HEK293 (cell line): ENCODE measurements at regions of chr10 and their contacts with region 1.

Region 1: DNA sequence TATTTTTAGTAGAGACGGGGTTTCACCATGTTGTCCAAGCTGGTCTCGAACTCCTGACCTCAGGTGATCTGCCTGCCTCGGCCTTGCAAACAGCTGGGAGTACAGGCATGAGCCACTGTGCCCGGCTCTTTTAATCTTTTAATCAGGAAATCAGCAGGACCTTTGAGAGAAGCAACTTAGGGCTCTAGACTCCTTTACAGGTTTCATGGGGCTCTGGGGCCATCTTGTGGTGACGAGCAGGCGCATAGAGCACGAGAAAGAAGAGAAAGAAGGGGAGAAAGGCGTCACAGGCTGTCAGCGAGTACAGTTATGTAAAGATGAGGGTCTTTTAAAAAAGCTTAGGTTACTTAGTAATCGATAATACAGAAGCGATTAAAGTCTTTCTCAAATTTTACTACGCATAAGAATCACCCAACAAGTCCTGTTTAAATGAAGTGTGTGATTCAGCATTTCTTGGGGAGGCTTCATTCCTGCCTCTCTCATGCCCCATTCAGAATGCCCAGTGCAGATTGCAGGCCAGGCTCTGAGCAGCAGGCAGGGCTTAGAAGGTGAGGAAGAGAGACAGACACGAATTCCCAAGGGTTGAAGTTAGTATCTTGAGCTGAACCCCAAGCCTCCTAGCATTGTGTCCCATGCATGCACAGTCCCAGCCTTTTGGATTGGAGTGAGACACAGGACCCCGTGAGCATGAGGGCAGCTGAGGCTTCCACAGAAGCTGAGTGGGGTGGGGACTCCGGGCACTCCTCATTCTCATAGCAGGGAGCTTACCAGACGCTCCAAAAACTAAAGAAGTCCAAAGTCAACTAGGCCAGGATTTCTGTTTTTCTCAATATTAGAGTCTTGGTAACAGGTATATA is 23.6 kb upstream of the PFKP start:
- H3K4me3 ChIP-seq: no peak overlapping the region
- H3K27ac ChIP-seq: no peak overlapping the region
- H3K4me1 ChIP-seq: no peaks in the 10 kb centered on the region
- CTCF ChIP-seq: peak; percentile 55; the same call in 1 of the 2 replicates

Region 2: DNA sequence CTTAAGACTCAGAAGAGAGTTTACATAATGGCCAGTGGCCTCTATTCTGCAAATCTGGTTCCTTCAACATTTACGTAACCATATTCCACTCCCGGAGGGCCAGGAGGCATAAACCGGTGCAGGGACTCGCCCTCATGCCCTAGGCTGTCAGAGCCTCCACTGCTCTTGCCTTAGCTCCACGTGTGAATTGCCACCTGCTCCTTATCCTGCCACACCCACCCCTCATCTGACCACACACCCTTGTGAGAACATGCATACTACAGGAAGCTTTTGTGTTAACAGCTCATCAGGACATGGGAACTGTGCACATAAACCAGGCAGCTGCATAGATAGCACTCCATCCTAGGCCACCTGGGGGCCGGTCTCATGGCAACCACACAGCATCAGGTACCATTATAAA is 123.1 kb before region 1 on chr10:
- CTCF ChIA-PET with region 1: interaction called, 20 read pairs
- POLR2A ChIA-PET with region 1: no interaction called
- H3K4me3 ChIP-seq: no peak overlapping the region
- H3K27ac ChIP-seq: no peak overlapping the region
- H3K4me1 ChIP-seq: peaks cover 2% of the 10 kb centered on the region; the same call in 1 of the 2 replicates
- CTCF ChIP-seq: no peak

Region 3: DNA sequence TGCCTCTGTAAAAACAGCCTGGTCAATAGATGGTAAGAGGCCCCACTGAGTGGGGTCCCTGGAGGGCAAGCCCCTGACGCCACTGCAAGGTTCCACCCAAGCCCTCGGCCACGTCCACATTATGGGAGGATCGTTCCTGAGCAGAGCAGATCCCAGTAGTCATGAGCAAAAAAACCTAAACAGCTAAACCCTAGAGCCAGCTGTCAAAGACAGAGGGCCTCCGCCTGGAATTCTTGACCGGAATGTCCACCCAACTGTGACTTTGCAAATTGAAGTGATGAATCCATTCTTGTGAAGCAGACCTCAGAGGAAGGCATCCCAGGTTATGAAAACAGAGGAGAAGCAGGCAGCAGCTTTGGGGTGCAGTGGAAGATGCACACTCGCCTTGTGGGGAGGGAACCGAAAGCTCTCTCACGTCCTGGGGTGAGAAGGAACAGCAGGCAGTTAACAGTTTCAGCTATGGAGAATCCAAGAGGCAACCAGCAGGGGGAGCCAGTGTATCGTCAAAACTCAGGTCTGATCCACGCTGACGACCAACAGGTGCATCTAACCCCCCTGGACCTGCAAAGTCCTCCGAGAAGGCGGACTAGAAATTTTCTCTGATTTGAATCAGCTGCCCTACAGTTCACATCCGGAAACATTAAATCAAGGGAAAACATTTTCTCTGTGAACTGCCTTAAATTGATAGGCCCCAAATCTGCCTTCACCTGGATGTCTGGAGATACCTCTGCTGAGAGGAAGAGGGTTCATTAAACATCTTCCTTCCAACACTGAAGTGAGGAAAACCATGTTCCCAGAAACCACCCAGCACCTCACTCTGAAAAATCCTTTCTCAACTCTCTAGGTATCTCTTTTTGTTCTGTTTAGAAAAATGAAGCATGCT is 115.5 kb before region 1 on chr10:
- CTCF ChIA-PET with region 1: interaction called, 70 read pairs
- POLR2A ChIA-PET with region 1: no interaction called
- H3K4me3 ChIP-seq: no peak overlapping the region
- H3K27ac ChIP-seq: no peak overlapping the region
- H3K4me1 ChIP-seq: peaks cover 6% of the 10 kb centered on the region
- CTCF ChIP-seq: peak; percentile 58

Region 4: GRCh38 chr10:2938869-2939268 is 104.9 kb before region 1 on chr10:
- CTCF ChIA-PET with region 1: interaction called, 16 read pairs
- POLR2A ChIA-PET with region 1: no interaction called
- H3K4me3 ChIP-seq: no peak overlapping the region
- H3K27ac ChIP-seq: no peak overlapping the region
- H3K4me1 ChIP-seq: no peaks in the 10 kb centered on the region
- CTCF ChIP-seq: no peak

Region 5: GRCh38 chr10:2978111-2978510 is 65.6 kb before region 1 on chr10:
- CTCF ChIA-PET with region 1: interaction called, 12 read pairs
- POLR2A ChIA-PET with region 1: no interaction called
- H3K4me3 ChIP-seq: no peak overlapping the region
- H3K27ac ChIP-seq: no peak overlapping the region
- H3K4me1 ChIP-seq: no peaks in the 10 kb centered on the region
- CTCF ChIP-seq: peak; percentile 30; the same call in 1 of the 2 replicates

Region 6: GRCh38 chr10:3028441-3028840 is 15.3 kb before region 1 on chr10:
- CTCF ChIA-PET with region 1: interaction called, 24 read pairs
- POLR2A ChIA-PET with region 1: no interaction called
- H3K4me3 ChIP-seq: no peak overlapping the region
- H3K27ac ChIP-seq: no peak overlapping the region
- H3K4me1 ChIP-seq: no peaks in the 10 kb centered on the region
- CTCF ChIP-seq: no peak

Region 7: DNA sequence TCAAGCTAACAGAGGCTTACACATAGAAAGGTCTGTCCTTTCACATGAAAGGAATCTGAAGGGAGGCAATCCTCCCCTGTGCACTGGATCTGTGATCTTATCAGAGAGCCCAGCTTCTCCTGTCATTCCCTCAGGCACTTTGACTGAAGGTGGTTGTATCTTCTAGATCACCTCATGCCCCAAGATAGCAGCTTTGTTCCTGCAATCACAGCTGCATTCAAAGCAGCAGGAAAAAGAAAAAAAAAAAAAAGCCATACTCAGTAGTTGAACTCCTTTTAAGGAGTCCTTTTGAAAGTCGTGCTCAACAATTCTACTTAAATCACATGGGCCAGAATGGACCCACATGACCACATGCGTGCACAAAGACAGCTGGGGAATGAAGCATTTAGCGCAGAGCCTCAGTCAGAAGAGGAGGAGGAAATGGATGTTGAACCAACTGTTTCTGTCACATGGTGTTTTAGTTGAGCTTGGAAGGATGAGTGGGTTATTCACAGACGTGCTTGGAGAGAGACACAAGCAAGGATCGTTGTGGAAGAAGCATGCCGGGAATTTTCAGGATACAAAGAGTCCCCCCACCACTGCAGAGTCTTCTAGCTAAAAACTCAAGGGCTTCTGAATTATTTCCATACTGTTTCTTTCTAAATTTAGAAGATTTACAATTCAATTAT is 10.6 kb after region 1 on chr10:
- CTCF ChIA-PET with region 1: interaction called, 18 read pairs
- POLR2A ChIA-PET with region 1: interaction called, 3 read pairs
- H3K4me3 ChIP-seq: no peak overlapping the region
- H3K27ac ChIP-seq: no peak overlapping the region
- H3K4me1 ChIP-seq: no peaks in the 10 kb centered on the region
- CTCF ChIP-seq: no peak

Region 8: GRCh38 chr10:3099291-3100092 is 55.8 kb after region 1 on chr10:
- CTCF ChIA-PET with region 1: no interaction called
- POLR2A ChIA-PET with region 1: no interaction called
- H3K4me3 ChIP-seq: no peak overlapping the region
- H3K27ac ChIP-seq: no peak overlapping the region
- H3K4me1 ChIP-seq: peaks cover 13% of the 10 kb centered on the region
- CTCF ChIP-seq: no peak